Activated T-helper 1 cell treated with anti-CD3 and anti-CD28 coated beads, Interleukin-12 subunit alpha, Interleukin-12 subunit beta, Interleukin-2, Interleukin-4 antibody, amounts not matched to agents 30 ng/mL and 10 ng/mL and 1 ng/mL, durations not matched to agents 14 hours and 24 hours and 36 hours (primary cell): ENCODE measurements at regions of chr7 and their contacts with region 1.

Region 1: GRCh38 chr7:41847151-41847550 is 144.3 kb upstream of the INHBA start:
- DNase-seq: no peak
- H3K4me3 Mint-ChIP-seq: no peak overlapping the region
- H3K27ac Mint-ChIP-seq: no peak overlapping the region
- H3K4me1 Mint-ChIP-seq: peaks cover 6% of the 10 kb centered on the region
- H3K27me3 Mint-ChIP-seq: peaks cover 2% of the 10 kb centered on the region

Region 2: GRCh38 chr7:41828791-41829310 is 18.3 kb before region 1 on chr7:
- intact Hi-C with region 1: loop called (anchors 2 kb)
- DNase-seq: no peak
- H3K4me3 Mint-ChIP-seq: no peak overlapping the region
- H3K27ac Mint-ChIP-seq: no peak overlapping the region
- H3K4me1 Mint-ChIP-seq: no peaks in the 10 kb centered on the region
- H3K27me3 Mint-ChIP-seq: no peaks in the 10 kb centered on the region